ENCODE measurements at regions of chr5 and their contacts with region 1.

Region 1: DNA sequence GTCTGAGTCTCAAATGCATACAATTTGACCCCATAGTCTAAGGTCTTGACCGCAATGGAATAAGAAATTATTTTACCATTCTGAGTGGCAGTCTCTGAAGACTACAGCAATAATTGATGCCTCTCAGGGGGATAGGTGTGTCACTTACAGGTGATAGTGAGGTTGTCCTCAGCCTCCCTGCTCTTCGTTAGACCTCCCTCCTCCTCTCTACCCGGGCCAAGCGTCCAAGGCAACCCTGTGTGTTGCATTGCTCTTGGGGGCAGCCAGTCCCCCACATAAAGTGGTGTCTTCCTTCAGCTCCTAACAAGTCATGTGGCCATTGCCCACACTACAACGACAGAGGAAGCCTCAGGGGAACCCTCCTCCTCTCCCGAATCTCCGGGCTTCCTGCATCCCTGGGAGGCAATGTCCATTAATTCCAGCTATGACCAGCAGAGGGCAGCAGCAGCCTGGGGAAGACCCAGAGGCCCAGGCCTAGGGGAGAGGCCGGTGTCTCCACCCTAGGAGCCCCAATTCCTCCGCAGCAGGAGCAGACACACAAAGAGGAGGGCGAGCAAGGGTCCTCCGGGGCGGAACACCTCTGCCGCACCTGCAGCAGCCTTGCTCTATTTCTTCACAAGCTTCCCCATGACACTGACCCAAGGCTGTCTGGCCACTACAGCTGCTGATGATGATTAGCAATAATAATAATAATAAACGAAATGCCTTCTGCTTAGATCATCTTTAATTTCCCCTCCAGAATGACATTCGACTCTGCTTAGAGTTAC is 134.8 kb downstream of the KCNIP1 start:
- DNase-seq: peak; percentile 50 to 80 (median 78)
- ATAC-seq: peak; percentile 52 to 74
- H3K4me3 ChIP-seq: no peak overlapping the region
- H3K27ac ChIP-seq: no peak overlapping the region
- H3K4me1 ChIP-seq: peaks cover 3% of the 10 kb centered on the region
- H3K27me3 ChIP-seq: no peaks in the 10 kb centered on the region

Region 2: DNA sequence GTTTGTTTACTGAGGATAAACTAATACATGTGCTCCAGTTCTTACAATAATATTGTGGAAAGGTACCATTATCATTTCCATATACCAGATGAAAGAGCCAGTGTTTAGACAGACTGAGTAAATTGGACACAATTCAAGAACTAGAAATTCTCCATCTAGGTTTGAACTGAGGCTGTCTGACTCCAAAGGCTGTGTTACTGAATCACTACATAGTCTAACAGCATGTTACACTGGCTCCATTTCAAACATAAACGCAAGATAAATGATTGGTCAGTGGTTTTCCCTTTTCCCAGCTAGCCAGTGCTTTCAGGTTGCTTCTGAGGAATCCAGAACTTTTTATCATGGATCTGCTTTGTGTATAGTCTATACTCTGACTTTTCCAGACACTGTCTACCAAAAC is 1047.0 kb before region 1 on chr5:
- intact Hi-C with region 1: no loop called
- DNase-seq: no peak
- ATAC-seq: no peak
- H3K4me3 ChIP-seq: no peak overlapping the region
- H3K27ac ChIP-seq: no peak overlapping the region
- H3K4me1 ChIP-seq: no peaks in the 10 kb centered on the region
- H3K27me3 ChIP-seq: no peaks in the 10 kb centered on the region

Region 3: GRCh38 chr5:170225326-170226128 is 413.1 kb before region 1 on chr5:
- intact Hi-C with region 1: loop called in 1 of 4 experiments (anchors 10 kb)
- DNase-seq: peak; percentile 74 to 90 (median 76)
- ATAC-seq: peak; percentile 77 to 82
- H3K4me3 ChIP-seq: no peak overlapping the region
- H3K27ac ChIP-seq: no peak overlapping the region
- H3K4me1 ChIP-seq: peaks cover 3% of the 10 kb centered on the region
- H3K27me3 ChIP-seq: no peaks in the 10 kb centered on the region

Region 4: DNA sequence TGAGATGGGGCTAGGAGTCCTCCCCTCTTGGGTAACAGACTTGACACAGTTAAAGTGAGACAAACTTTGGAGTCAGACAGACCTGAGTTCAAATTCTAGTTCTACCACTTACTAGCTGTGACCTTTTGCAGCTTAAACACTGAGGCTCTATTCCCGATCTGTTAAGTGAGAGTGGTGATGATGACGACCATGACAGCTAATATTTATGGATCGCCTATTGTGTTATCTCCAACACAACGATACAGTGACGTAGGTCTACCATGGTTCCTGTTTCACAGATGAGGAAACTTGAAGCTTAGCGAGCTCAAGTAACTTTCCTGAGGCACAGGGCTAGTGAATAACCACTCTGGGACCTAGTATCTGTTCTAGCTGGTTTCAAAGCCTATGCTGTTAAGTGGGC is 34.6 kb after region 1 on chr5:
- intact Hi-C with region 1: no loop called
- DNase-seq: no peak
- ATAC-seq: no peak
- H3K4me3 ChIP-seq: no peak overlapping the region
- H3K27ac ChIP-seq: no peak overlapping the region
- H3K4me1 ChIP-seq: no peaks in the 10 kb centered on the region
- H3K27me3 ChIP-seq: no peaks in the 10 kb centered on the region

Region 5: DNA sequence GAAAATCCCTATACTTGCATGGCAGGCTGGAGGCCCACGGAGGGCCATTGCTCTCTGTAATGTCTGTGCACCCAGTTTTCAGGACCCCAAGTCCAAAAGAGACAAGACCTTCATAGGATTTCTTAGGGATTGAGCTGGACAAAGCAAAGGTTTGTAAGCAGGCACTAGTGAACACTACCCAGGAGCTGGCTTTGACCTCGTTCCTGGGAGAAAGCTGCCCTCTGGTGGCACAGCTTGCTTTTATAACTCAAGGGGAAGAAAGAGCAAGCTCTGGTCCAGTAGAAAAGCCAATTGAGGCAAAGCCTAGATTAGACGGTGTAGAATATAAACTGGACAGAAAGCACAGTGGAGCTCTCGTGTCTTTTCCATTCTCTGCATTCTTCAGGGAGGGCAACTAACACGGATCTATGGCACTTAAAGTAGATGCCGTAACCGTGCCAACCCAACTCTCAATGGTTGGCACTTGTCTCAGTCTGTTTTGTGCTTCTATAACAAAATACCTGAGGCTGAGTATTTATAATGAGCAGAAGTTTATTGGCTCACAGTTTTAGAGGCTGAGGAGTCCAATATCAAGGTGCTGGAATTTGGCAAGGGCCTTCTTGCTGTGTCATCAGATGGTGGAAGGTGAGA is 152.8 kb after region 1 on chr5:
- intact Hi-C with region 1: loop called in 2 of 4 experiments (anchors 2 to 5 kb)
- DNase-seq: peak; percentile 59 to 83 (median 80)
- ATAC-seq: peak; percentile 68 to 71
- H3K4me3 ChIP-seq: no peak overlapping the region
- H3K27ac ChIP-seq: no peak overlapping the region
- H3K4me1 ChIP-seq: no peaks in the 10 kb centered on the region
- H3K27me3 ChIP-seq: no peaks in the 10 kb centered on the region

Region 6: DNA sequence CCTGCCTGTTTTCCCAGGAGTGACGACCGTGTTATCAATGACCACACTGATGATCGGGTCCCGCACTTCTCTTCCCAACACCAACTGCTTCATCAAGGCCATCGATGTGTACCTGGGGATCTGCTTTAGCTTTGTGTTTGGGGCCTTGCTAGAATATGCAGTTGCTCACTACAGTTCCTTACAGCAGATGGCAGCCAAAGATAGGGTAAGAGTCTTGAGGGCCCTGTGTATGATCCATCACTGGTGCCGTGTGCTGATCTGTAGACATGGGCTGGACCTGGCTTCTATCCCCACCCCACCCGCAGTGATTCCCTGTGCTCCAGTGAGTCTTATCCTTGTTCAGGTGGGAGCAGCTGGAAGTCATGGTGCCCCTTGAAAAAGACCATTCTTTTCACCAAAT is 170.9 kb after region 1 on chr5:
- intact Hi-C with region 1: loop called in 1 of 4 experiments (anchors 5 kb)
- DNase-seq: no peak
- ATAC-seq: peak in 1 of 2 donors; percentile 45
- H3K4me3 ChIP-seq: no peak overlapping the region
- H3K27ac ChIP-seq: no peak overlapping the region
- H3K4me1 ChIP-seq: no peaks in the 10 kb centered on the region
- H3K27me3 ChIP-seq: no peaks in the 10 kb centered on the region

Region 7: GRCh38 chr5:171336521-171337209 is 698.0 kb after region 1 on chr5:
- intact Hi-C with region 1: loop called in 3 of 4 experiments (anchors 5 to 10 kb)
- DNase-seq: peak in 2 of 3 donors; percentile 31 to 74
- ATAC-seq: peak; percentile 78 to 79
- H3K4me3 ChIP-seq: peak overlapping the region; percentile 38
- H3K27ac ChIP-seq: no peak overlapping the region
- H3K4me1 ChIP-seq: no peaks in the 10 kb centered on the region
- H3K27me3 ChIP-seq: peaks cover 3% of the 10 kb centered on the region

Region 8: DNA sequence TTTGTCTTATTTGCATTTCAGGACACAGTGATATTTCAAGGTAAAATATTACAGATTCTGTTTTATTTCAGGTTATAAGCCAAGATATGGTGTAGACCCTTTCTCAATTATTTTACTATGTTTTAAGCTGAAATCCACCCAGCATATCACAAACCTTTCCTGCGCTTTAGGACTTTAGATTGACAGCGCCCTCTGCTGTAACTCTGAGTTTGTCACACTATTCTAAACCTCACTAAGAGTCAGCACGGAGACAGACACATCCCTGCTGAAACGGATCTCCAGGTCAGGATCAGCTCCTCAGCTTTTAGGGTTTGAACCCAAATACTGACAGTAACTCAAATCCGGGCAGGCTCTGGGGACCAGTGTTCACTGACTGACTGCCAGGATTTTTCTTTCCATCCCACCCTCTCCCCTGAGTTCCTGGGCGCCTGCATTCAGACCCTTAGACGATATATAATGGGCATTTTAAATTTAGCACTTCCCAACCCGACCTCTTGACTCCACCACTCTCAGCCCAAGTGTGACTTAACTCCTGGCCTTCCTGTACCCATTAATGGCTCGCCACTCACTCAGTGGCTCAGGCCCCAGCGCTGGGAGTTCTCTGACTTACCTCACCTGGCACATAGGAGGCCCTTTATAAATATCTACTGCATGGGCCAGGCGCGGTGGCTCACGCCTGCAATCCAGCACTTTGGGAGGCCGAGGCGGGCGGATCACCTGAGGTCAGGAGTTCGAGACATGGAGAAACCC is 703.9 kb after region 1 on chr5:
- intact Hi-C with region 1: loop called in 3 of 4 experiments (anchors 5 to 10 kb)
- DNase-seq: no peak
- ATAC-seq: peak in 1 of 2 donors; percentile 73
- H3K4me3 ChIP-seq: no peak overlapping the region
- H3K27ac ChIP-seq: no peak overlapping the region
- H3K4me1 ChIP-seq: no peaks in the 10 kb centered on the region
- H3K27me3 ChIP-seq: peaks cover 3% of the 10 kb centered on the region